AG04449 (cell line): ENCODE measurements at regions of chr3 and their contacts with region 1.

Region 1: GRCh38 chr3:194003125-194004057 is 132.6 kb upstream of the HES1 start:
- DNase-seq: peak; percentile 63
- H3K4me3 ChIP-seq: peak overlapping the region; percentile 48
- CTCF ChIP-seq: no peak

Region 2: DNA sequence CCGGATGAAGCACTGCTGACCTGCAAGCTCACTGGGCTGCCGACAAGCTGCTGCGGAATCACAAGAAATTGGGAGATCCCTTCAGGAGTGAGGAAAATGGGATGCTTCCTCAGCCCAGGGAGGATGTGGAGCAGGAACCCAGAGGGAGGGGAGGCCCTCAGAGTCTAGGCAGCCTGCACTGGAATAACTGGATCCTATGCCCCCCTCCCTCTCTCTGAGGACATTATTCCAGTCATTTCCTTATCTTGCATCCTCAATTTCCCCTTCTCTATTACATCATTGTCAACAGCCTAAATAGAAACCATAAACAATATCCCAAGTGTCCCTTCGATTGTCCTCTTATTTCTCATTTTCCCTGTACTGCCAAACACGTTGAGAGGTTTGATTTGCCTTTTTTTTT is 241.4 kb before region 1 on chr3:
- CTCF ChIA-PET with region 1: no interaction called
- POLR2A ChIA-PET with region 1: no interaction called
- DNase-seq: no peak
- H3K4me3 ChIP-seq: no peak overlapping the region
- CTCF ChIP-seq: no peak

Region 3: GRCh38 chr3:194032828-194033435 is 29.5 kb after region 1 on chr3:
- CTCF ChIA-PET with region 1: no interaction called
- POLR2A ChIA-PET with region 1: no interaction called
- DNase-seq: no peak
- H3K4me3 ChIP-seq: no peak overlapping the region
- CTCF ChIP-seq: no peak

Region 4: GRCh38 chr3:194043516-194043915 is 40.1 kb after region 1 on chr3:
- CTCF ChIA-PET with region 1: no interaction called
- POLR2A ChIA-PET with region 1: no interaction called
- DNase-seq: peak; percentile 49
- H3K4me3 ChIP-seq: no peak overlapping the region
- CTCF ChIP-seq: no peak

Region 5: DNA sequence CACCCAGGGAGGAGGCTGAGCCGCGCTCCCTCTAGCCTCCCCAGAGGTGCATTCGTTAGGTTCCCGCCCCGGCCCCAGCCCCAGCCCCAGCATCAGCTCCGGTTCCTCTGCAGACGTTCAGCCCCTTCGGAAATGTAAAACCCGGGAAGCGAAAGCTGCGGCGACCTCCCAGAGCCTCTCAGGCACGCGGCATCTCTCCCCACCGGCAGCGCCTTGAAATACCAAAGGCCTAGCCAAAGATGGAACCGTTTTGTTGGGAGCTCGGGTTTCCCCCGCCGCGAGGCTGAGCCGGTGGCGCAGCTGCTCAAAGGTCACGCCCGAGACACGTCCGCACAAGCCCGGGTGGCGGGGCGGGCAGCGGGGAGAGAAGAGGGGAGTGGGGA is 54.8 kb after region 1 on chr3:
- CTCF ChIA-PET with region 1: no interaction called
- POLR2A ChIA-PET with region 1: no interaction called
- DNase-seq: no peak
- H3K4me3 ChIP-seq: peak overlapping the region; percentile 29
- CTCF ChIP-seq: no peak

Region 6: DNA sequence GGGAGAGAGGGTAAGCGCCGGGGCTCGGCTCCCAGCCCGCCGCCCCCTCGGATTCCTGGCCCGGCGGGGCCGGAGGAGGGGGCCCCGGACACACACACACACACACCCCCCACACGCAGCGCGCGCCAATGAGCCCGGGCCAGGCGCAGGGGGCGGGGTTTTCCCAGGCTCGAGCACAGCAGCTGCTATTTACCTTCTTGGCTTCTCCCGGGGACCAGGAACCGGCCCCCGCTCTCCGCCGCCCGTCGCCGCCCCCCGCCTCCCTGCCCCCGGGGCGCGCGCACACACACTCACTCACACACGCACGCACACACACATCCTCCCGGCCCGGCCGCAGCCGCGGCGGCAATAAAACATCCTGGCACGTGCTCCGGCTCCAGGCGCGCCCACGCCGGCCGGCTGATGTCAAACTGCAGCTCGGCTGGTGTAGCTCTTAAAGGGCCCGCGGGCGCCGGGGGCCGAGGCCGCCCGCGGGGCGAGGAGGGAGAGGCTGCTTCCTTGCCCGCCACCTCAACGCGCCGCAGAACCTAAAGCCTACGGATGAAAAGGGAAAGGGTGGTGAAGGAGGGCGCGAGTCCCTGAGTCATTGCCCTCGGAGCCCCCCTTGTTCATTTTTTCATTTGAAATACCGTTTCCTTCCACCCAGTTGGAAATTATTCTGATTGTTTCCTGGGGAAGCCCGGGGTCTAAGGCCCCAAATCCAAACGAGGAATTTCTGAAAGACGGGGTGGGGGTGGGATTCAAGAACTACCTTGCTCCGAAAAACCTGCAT is 131.6 kb after region 1 on chr3:
- CTCF ChIA-PET with region 1: interaction called, 5 read pairs
- POLR2A ChIA-PET with region 1: interaction called, 21 read pairs
- DNase-seq: peak; percentile 85
- H3K4me3 ChIP-seq: peak overlapping the region; percentile 62
- CTCF ChIP-seq: no peak